Motor neuron (in vitro differentiated cells): ENCODE measurements at regions of chrX and their contacts with region 1.

Region 1: DNA sequence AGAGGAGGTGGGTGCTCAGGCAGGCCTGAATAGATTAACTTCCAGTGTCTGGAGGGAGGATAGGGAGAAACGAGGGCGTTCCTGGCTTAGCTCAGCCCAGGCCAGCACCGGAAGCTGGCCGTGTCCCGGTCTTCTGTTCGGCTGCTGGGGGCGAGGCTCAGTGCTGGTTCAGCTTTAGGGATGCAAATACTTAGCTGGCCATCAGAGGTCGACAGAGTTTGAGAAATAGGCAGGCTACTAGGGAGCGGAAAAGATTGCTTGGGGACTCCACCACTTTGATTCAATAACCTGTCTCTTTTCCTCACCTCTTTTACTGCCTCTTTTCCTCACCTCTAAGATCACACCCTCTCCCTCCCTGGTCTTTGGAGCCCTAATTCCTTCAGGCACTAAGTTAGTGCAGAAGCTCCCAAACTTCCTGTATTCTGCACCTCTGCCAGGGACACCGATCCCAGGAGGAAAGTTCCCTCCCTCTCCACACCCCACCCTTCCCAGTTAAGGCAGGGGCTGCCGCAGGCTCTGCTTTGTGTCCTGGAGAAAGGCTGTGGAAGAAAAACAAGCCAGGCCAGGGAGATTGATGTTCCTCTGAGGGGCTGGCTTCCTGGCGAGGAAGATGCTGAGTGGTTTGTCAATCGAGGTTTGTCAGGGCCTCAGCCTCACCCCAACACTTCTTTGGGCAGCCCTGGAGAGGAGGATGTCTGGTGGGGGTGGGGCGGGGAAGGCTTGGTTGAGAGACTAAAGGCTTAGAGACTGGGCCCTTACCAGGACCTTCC is 6.0 kb upstream of the EFNB1 start:
- ATAC-seq: peak; percentile 87 to 95 (median 90)
- H3K4me3 ChIP-seq: no peak overlapping the region
- H3K27ac ChIP-seq: peak overlapping the region in 1 of 2 donors; percentile 59
- H3K4me1 ChIP-seq: peaks cover 14 to 18% of the 10 kb centered on the region in 2 donors

Region 2: DNA sequence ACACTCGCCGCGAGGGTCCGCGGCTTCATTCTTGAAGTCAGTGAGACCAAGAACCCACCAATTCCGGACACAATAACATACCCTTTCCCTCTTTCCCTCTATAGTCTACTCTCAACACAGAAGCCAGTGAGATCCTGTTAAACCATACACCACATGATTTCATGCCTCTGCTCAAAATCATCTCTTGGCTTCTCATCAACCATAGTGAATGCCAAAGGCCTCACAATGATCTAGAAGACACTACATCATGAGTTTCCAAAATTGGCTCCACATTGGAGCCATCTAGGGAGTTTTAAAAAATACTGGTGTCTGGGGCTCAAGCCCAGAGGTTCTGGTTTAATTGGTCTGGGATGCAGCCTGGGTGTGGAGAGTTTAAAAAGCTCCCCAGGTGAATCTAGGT is 130.5 kb after region 1 on chrX:
- in situ Hi-C with region 1: no loop called
- ATAC-seq: no peak
- H3K4me3 ChIP-seq: no peak overlapping the region
- H3K27ac ChIP-seq: no peak overlapping the region
- H3K4me1 ChIP-seq: peaks cover 6 to 8% of the 10 kb centered on the region in 2 donors

Region 3: GRCh38 chrX:69387567-69388487 is 565.0 kb after region 1 on chrX:
- in situ Hi-C with region 1: loop called in 1 of 9 experiments (anchors 25 kb)
- ATAC-seq: peak; percentile 61 to 95 (median 91)
- H3K4me3 ChIP-seq: no peak overlapping the region
- H3K27ac ChIP-seq: no peak overlapping the region
- H3K4me1 ChIP-seq: peaks cover 3 to 6% of the 10 kb centered on the region in 2 donors

Region 4: GRCh38 chrX:69762340-69762739 is 939.5 kb after region 1 on chrX:
- in situ Hi-C with region 1: no loop called
- ATAC-seq: no peak
- H3K4me3 ChIP-seq: no peak overlapping the region
- H3K27ac ChIP-seq: no peak overlapping the region
- H3K4me1 ChIP-seq: no peaks in the 10 kb centered on the region